ENCODE measurements at regions of chr17 and their contacts with region 1.

Region 1: DNA sequence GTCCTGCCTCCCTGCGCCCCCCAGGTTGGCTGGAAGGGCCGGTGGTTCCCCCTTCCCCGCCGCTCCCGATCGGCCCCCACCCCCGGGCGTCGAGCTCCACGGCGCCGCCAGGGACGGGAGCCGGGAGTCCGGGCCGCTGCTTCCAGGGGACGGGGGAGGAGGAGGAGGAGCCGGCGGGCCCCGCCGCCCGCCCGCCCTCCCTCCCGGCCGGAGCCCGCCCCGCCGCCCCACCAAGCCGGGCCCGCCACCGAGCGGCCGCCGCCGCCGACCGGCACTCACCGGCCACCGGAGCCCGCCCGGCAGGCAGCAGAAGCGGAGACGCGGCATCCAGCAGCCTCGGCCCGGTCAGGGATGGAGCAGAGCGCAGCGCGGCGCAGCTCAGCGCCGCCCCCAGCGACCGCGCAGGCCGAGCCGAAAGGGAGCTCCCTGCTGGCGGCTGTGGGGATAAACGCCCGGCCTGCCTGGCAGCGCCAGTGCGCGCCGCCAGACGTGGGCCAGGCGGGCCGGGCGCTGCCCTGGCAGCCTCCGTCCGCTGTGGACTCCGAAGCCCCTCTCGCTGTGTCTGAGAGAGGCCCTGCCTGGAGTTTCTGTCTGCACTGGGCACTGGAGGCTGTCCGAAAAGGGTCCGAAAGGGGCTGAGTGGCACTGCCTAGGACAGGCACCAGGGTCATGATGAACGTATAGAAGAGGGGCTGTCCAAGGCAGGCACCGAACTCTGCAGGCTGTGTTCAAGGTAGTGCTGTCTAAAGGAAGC is at the start of gene MYO18A:
- DNase-seq: peak; percentile 73
- H3K4me3 Mint-ChIP-seq: peak within 1 kb of the TSS; percentile 57
- H3K27ac Mint-ChIP-seq: no peak within 1 kb of the TSS
- H3K4me1 Mint-ChIP-seq: peaks cover 12% of the 10 kb centered on the region
- H3K27me3 Mint-ChIP-seq: peaks cover 11% of the 10 kb centered on the region
- total RNA-seq, gene MYO18A: 49.5 and 50.3 TPM in 2 replicates

Region 2: DNA sequence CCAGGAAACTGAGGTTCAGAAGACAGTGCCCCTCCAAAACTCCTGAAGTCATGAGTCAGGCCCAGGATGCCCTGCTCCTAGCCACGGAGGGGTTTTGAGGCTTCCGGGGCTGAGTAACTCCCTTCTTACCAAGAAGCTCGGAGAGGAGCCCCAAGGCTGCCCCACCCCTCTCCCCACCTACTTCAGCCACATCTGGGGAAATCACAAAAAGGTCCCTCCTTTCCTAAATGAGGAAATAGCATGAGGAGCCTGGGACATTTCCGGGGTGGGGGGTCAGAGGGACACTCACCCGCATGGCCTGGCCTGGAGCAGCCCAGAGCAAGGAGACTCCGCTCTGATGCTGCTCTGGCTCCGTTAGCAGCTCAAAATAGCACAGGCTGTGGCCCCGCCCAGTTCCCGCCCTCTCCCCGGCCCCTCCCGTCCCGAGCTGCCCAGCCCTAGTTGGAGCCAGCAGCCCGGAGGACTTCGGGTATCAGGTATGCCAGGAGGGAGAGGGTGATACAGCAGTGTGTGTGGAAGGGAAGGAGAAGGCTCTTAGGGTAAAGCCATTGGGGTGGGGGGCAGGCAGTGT is 40.1 kb before region 1 on chr17:
- intact Hi-C with region 1: loop called (anchors 5 kb)
- DNase-seq: peak; percentile 78
- H3K4me3 Mint-ChIP-seq: peak overlapping the region; percentile 89
- H3K27ac Mint-ChIP-seq: peak overlapping the region; percentile 99
- H3K4me1 Mint-ChIP-seq: peaks cover 63% of the 10 kb centered on the region
- H3K27me3 Mint-ChIP-seq: no peaks in the 10 kb centered on the region

Region 3: GRCh38 chr17:29155227-29155965 is 24.8 kb before region 1 on chr17:
- intact Hi-C with region 1: loop called (anchors 2 kb)
- DNase-seq: peak; percentile 55
- H3K4me3 Mint-ChIP-seq: peak overlapping the region; percentile 45
- H3K27ac Mint-ChIP-seq: peak overlapping the region; percentile 94
- H3K4me1 Mint-ChIP-seq: peaks cover 40% of the 10 kb centered on the region
- H3K27me3 Mint-ChIP-seq: no peaks in the 10 kb centered on the region